Heart left ventricle (tissue), 16 donors: ENCODE measurements at regions of chr17 and their contacts with region 1.

Region 1: DNA sequence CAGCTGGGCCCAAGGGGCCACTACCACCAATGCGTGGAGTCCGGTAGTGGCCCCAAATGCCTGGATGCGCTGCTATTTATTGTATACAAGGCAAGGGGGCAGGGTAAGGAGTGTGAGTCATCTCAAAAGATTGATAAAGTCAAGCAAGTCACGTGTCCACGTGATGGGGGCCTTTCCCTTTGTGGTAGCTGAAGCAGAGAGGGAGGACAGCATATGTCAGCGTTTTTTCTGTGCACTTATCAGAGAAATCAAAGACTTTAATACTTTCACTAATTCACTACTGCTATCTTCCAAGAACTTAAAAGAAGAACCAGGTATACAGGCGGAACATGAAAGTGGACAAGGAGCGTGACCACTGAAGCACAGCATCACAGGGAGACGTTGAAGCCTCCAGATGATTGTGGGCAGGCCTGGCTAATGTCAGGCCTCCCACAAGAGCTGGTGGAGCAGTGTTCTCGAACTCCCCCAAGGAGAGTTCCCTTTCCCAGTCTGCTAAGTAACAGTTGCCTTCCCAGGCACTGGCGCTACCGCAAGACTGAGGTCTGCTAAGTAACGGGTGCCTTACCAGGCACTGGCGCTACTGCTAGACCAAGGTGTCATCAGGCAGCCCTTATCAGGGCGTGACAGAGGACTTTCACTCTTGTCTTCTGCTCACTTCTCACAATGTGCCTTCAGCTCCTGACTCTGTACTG is 10.8 kb upstream of the ASB16 start:
- DNase-seq: no peak
- ATAC-seq: no peak
- H3K4me3 ChIP-seq: no peak overlapping the region
- H3K27ac ChIP-seq: no peak overlapping the region
- H3K4me1 ChIP-seq: no peaks in the 10 kb centered on the region
- H3K27me3 ChIP-seq: no peaks in the 10 kb centered on the region
- CTCF ChIP-seq: no peak
- POLR2A ChIP-seq: no peak

Region 2: GRCh38 chr17:43940630-43941029 is 219.0 kb before region 1 on chr17:
- intact Hi-C with region 1: loop called in 6 of 10 experiments (anchors 10 kb)
- DNase-seq: peak in 2 of 5 donors; percentile 38 to 61
- ATAC-seq: peak; percentile 41 to 57 (median 44)
- H3K4me3 ChIP-seq: no peak overlapping the region
- H3K27ac ChIP-seq: no peak overlapping the region
- H3K4me1 ChIP-seq: peaks cover 0 to 11% (median 3%) of the 10 kb centered on the region in 12 donors
- H3K27me3 ChIP-seq: peaks cover 0 to 21% (median 9%) of the 10 kb centered on the region in 9 donors
- CTCF ChIP-seq: peak; percentile 17 to 46 (median 30)
- POLR2A ChIP-seq: no peak

Region 3: DNA sequence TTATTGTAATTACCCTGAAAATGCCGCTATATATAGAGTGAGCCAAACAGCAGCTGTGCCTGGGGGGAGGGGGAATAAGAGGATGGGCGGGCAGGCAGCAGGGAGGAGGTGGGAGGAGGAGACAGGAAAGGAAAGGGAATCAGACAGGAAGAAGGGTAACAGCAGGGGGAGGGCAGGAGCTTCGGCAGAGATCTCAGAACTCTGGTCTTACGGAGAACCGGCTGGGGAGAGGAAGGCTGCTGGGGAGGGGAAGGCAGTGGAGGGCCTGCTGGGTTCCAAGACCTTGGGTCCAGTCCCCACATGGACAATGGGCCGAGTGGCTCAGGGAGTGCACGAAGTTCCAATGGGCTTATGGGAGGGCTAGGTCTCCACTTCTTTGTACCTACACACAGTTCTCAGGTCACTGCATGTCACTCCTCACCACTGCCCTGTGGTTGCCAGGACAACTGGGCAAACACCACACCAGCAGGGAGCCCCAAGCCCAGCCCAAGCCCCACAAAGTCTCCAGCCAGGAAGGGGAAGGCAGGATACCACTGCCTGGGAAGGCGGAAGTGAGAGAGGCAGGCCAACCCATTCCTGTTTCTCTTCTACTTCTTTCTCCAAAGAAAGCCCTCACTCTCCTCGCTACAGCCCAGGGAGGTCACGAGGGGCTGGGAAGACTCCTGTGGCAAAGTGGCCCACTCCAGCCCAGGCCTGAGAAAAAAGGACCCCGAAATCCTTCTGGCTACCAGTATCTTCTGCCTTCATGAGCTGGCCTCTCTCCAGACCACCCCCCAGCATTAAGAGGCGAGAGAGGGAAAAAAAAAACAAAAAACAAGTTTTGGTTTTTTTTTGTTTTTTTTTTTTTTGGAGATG is 63.8 kb before region 1 on chr17:
- intact Hi-C with region 1: no loop called
- DNase-seq: peak; percentile 77 to 90 (median 86)
- ATAC-seq: peak; percentile 68 to 82 (median 73)
- H3K4me3 ChIP-seq: peak overlapping the region in 10 of 12 donors; percentile 3 to 62 (median 38)
- H3K27ac ChIP-seq: peak overlapping the region; percentile 78 to 98 (median 90)
- H3K4me1 ChIP-seq: peaks cover 5 to 65% (median 50%) of the 10 kb centered on the region in 12 donors
- H3K27me3 ChIP-seq: no peaks in the 10 kb centered on the region
- CTCF ChIP-seq: peak in 8 of 12 donors; percentile 24 to 48 (median 26)
- POLR2A ChIP-seq: no peak